ENCODE measurements at regions of chr7 and their contacts with region 1.

Region 1: GRCh38 chr7:101519324-101520023 is 109.6 kb downstream of the MYL10 start:
- DNase-seq: no peak
- H3K4me3 ChIP-seq: no peak overlapping the region
- H3K27ac ChIP-seq: no peak overlapping the region
- H3K4me1 ChIP-seq: no peaks in the 10 kb centered on the region
- H3K27me3 ChIP-seq: peaks cover 83% of the 10 kb centered on the region
- CTCF ChIP-seq: no peak

Region 2: GRCh38 chr7:100503345-100503725 is 1016.1 kb before region 1 on chr7:
- CTCF ChIA-PET with region 1: no interaction called
- POLR2A ChIA-PET with region 1: interaction called, 14 read pairs
- intact Hi-C with region 1: no loop called
- DNase-seq: peak in 1 of 2 experiments; percentile 91
- H3K4me3 ChIP-seq: peak overlapping the region; percentile 35; the same call in 1 of the 2 replicates
- H3K27ac ChIP-seq: peak overlapping the region; percentile 98
- H3K4me1 ChIP-seq: peaks cover 44% of the 10 kb centered on the region
- H3K27me3 ChIP-seq: no peaks in the 10 kb centered on the region
- CTCF ChIP-seq: no peak

Region 3: DNA sequence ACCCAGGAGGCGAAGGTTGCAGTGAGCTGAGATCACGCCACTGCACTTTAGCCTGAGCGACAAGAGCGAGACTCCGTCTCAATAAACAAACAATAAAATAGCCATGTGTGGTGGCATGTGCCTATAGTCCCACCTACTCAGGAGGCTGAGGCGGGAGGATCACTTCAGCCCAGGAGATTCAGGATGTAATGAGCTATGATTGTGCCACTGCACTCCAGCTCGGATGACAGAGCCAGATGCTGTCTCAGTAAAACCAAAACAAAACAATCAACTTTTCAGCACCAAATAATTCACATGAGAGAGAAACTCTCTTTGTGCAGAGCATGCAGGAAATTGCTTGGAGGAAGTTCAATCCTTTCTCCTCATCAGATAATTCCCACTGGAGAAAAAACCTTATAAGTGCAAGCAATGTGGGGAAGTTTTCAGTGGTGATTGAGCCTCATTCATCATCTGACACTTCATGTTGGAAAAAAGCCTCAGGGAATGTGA is 261.2 kb before region 1 on chr7:
- CTCF ChIA-PET with region 1: no interaction called
- POLR2A ChIA-PET with region 1: no interaction called
- intact Hi-C with region 1: no loop called
- DNase-seq: no peak
- H3K4me3 ChIP-seq: no peak overlapping the region
- H3K27ac ChIP-seq: no peak overlapping the region
- H3K4me1 ChIP-seq: no peaks in the 10 kb centered on the region
- H3K27me3 ChIP-seq: 0 out of 2 replicates have a peak, but pooled peaks cover 3% of the 10 kb centered on the region
- CTCF ChIP-seq: no peak

Region 4: DNA sequence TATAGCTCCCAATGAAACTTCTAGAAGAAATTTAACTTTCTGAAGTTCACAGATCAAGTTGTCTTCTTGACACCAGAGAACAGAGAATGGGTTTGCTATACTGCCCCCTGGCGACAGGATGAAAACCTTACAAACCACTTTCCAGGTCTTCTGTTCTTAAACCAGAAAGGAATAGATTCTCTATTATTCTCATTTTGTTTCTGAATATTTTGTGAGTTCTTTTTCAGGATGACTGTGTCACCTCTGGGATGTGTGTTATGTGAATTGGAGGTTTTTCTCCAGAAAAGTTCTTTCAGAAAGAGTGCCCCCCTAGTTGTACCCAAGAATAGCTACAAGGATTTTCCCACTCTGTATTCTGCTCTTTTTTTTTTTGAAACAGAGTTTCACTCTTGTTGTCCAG is 204.1 kb before region 1 on chr7:
- CTCF ChIA-PET with region 1: interaction called, 22 read pairs
- POLR2A ChIA-PET with region 1: no interaction called
- intact Hi-C with region 1: no loop called
- DNase-seq: peak in 1 of 2 experiments; percentile 21
- H3K4me3 ChIP-seq: no peak overlapping the region
- H3K27ac ChIP-seq: no peak overlapping the region
- H3K4me1 ChIP-seq: no peaks in the 10 kb centered on the region
- H3K27me3 ChIP-seq: no peaks in the 10 kb centered on the region
- CTCF ChIP-seq: peak; percentile 78

Region 5: DNA sequence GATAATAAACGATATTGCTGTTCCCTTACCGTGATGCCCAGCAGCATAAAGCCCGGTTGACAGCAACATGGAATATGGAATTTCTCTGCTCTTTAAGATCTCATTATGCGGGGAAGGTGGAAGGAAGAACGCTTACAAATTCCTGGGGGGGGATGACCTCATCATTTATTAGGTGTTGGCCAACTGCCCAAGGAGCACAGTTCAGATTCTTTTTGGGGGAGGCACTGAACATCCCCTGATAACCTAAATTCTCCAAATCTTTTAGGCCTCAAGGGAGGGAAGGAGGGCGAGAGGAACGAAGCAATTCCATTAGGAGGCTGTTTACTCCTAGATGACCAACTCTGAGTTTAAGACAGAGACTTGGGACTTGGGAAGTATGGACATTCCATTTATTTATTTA is 162.0 kb before region 1 on chr7:
- CTCF ChIA-PET with region 1: no interaction called
- POLR2A ChIA-PET with region 1: interaction called, 10 read pairs
- intact Hi-C with region 1: no loop called
- DNase-seq: no peak
- H3K4me3 ChIP-seq: no peak overlapping the region
- H3K27ac ChIP-seq: no peak overlapping the region
- H3K4me1 ChIP-seq: peaks cover 1% of the 10 kb centered on the region; the same call in 1 of the 2 replicates
- H3K27me3 ChIP-seq: no peaks in the 10 kb centered on the region
- CTCF ChIP-seq: no peak

Region 6: DNA sequence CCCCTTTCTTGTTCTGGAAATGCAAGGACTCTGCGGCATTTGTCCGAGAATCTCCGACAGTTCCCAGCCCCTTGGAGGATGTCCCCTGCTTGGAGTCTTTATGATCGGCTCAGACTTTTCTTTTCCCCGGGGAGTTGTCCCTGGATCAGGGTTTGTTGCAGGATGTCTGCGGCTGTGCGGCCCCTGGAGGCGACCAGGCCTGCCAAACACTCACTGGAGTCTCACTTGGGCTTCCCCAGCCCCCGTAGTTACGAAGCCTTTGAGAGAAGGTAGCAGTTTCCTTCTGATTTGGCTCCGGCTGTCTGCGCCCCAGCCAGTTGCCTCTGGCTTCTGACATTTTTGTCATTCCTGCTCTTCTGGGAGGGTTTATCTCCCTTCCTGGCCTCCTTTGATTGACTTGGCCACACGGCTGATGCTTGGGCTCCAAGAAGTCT is 140.7 kb before region 1 on chr7:
- CTCF ChIA-PET with region 1: interaction called, 15 read pairs
- POLR2A ChIA-PET with region 1: no interaction called
- intact Hi-C with region 1: no loop called
- DNase-seq: no peak
- H3K4me3 ChIP-seq: no peak overlapping the region
- H3K27ac ChIP-seq: no peak overlapping the region
- H3K4me1 ChIP-seq: no peaks in the 10 kb centered on the region
- H3K27me3 ChIP-seq: peaks cover 12% of the 10 kb centered on the region
- CTCF ChIP-seq: no peak